Breast epithelium (tissue), 4 donors: ENCODE measurements at regions of chr5 and their contacts with region 1.

Region 1: DNA sequence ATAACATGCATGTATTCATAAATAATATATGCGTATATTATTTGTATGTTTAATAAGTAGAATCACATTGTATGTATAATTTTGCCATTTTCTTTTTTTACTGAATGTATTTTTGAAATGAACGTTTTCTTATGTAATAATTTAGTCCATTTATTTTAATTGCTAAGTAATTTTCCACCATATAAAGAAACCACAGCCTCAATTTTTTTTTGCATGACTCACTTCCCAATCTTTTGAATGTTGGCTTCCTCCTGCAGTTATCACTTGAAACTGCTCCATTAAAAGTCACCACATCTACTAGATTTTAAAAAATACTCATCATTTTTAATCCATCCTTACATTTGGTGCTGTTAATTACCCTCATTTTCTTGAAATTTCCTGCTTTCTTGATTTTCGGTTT is 363.3 kb upstream of the MEF2C start:
- DNase-seq: no peak
- H3K4me3 ChIP-seq: no peak overlapping the region
- H3K27ac ChIP-seq: no peak overlapping the region
- H3K4me1 ChIP-seq: no peaks in the 10 kb centered on the region
- H3K27me3 ChIP-seq: no peaks in the 10 kb centered on the region
- CTCF ChIP-seq: no peak
- POLR2A ChIP-seq: no peak

Region 2: GRCh38 chr5:88979726-88980125 is 266.5 kb before region 1 on chr5:
- intact Hi-C with region 1: loop called (anchors 5 kb)
- DNase-seq: no peak
- H3K4me3 ChIP-seq: no peak overlapping the region
- H3K27ac ChIP-seq: no peak overlapping the region
- H3K4me1 ChIP-seq: no peaks in the 10 kb centered on the region
- H3K27me3 ChIP-seq: no peaks in the 10 kb centered on the region
- CTCF ChIP-seq: no peak
- POLR2A ChIP-seq: no peak